ENCODE measurements at regions of chr16 and their contacts with region 1.

Region 1: DNA sequence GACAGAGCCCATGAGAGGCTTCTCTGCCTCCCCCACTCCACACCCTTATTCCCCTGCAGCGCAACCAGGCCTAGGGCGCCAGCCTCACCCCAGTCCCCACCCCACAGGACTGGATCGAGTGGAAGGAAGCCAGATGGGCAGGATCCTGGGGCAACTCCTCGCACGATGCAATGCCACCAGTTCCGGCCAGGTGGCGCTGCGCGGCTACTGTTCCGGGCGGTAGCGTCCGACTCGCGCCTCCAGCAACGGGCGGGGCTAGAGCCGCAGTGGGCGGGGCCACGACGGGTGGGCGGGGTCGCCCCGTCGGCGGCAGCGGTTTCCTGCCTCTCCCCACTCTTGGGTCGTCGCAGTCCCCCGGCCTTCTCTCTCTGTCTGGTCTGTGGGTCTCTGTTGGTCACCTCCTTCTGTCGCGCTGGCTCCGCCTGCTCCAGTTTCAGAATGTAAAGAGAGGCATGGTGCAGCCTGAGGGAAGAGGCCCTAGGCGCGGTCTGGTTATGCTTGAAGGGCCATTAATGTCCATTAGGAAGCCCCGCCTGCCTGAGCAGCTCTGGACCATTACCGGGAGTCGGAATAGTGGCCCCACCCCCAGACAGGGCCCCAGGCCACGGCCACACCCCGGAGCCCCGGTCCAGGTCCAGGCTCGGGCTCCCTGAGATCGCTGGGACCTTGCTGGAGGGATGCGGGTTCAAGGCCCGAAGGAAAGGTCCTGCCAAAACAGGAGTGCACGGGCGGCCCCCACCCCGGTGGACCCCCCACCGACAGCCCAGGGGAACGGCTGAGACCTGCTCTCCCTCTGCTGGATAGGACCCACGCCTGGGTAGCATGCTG is 3.4 kb upstream of the NHERF2 start:
- DNase-seq: peak; percentile 96 to 97
- H3K4me3 ChIP-seq: peak overlapping the region; percentile 24 to 39 (median 35)
- H3K27ac ChIP-seq: peak overlapping the region; percentile 66 to 81 (median 74)
- H3K4me1 ChIP-seq: peaks cover 46 to 65% (median 61%) of the 10 kb centered on the region in 4 donors
- H3K27me3 ChIP-seq: peaks cover 20 to 53% (median 31%) of the 10 kb centered on the region in 3 donors
- CTCF ChIP-seq: peak in 6 of 7 experiments; percentile 87 to 99 (median 99)
- EP300 ChIP-seq: no peak
- POLR2A ChIP-seq: no peak

Region 2: GRCh38 chr16:2082160-2082982 is 59.1 kb after region 1 on chr16:
- intact Hi-C with region 1: loop called (anchors 10 kb)
- DNase-seq: peak; percentile 90 to 91
- H3K4me3 ChIP-seq: no peak overlapping the region
- H3K27ac ChIP-seq: peak overlapping the region; percentile 46 to 70 (median 65)
- H3K4me1 ChIP-seq: peaks cover 13 to 35% (median 24%) of the 10 kb centered on the region in 4 donors
- H3K27me3 ChIP-seq: no peaks in the 10 kb centered on the region
- CTCF ChIP-seq: peak in 5 of 7 experiments; percentile 21 to 54 (median 22)
- EP300 ChIP-seq: no peak
- POLR2A ChIP-seq: peak in 1 of 4 donors; percentile 42

Region 3: DNA sequence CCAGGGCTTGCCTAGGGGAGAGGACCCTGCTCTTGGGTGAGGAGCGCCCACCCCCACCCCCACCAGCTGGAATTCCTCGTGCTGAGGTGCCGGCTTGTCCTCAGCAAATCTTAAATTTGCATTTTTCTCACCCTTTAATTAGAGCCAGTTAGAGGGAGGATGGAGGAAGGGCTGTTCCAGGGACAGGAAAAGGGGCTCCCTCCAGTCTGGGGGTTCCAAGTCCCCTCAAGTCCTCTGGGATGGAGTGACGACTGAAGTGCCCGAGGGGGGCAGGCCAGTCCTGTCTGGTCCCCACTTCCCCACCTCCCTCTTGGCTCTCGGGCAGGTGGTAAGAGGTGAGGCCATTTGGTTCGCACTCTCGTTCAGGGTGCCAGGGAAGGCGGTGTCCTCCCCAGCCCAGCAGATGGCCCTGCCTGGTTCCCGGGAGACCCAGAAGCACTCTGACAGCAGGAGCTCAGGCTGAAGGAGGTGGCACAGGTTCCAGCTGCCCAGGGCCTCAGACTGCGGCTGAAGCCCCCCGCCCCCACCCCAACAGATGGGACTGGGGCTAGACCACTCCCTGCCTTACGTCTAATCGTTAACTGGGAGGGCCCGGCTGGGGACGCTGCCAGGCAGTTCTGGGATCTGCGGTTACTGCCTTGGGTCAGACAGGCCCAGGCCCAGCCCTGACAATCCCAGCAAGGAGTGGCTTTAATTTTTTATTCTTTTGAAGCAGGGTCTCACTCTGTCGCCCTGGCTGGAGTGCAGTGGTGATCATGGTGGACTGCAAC is 127.3 kb after region 1 on chr16:
- intact Hi-C with region 1: loop called (anchors 5 kb)
- DNase-seq: peak; percentile 59 to 78
- H3K4me3 ChIP-seq: peak overlapping the region in 1 of 4 donors; percentile 6
- H3K27ac ChIP-seq: peak overlapping the region; percentile 27 to 97 (median 81)
- H3K4me1 ChIP-seq: peaks cover 64 to 85% (median 78%) of the 10 kb centered on the region in 4 donors
- H3K27me3 ChIP-seq: peaks cover 0 to 4% (median 0%) of the 10 kb centered on the region in 3 donors
- CTCF ChIP-seq: no peak
- EP300 ChIP-seq: no peak
- POLR2A ChIP-seq: no peak

Measured in stomach (tissue), 19 donors.